ENCODE measurements at regions of chr16 and their contacts with region 1.

Region 1: DNA sequence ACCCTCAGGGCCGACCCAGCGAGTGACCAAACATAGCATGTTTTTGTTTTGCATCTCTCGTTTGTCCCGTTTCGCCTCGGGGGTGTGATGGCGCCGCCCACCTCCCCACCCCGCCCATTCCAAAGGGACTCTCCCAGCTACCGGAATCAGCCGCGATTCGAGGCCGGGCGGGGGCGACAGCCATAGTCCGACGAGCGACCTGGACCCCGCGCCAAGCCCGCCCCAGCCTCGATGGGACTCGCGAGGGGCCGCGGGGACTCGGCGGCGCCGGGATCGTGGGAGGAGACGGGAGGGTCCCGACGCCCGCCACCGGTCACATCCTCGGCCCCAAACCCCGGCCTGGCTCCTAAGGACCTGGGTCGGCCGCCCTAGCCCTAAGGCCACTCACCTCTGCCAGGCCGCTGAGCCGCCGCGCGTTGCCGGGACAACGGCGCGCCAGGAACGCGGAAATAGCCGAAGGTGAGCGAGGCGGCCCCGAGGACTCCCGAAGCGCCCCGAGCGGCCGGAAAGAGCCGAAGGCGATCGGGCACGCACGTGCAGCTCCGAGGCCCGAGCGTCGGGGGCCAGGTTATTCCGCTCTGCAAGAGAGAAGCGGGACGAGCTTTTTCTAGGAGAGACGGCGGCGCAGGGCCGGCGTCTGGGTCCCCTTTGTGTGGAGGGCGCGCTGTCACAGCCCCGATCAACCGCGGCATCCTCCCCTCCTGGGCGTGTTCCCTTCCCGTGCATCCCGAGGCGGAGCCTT is 1.4 kb downstream of the IFT140 start:
- DNase-seq: peak; percentile 84 to 90 (median 86)
- H3K4me3 ChIP-seq: peak overlapping the region; percentile 48 to 85 (median 58)
- H3K4me3 Mint-ChIP-seq: peak overlapping the region; percentile 77 to 80
- H3K27ac ChIP-seq: peak overlapping the region; percentile 36 to 63
- H3K27ac Mint-ChIP-seq: peak overlapping the region in 4 of 7 donors; percentile 24 to 82 (median 62)
- H3K4me1 ChIP-seq: peaks cover 41 to 48% of the 10 kb centered on the region in 2 donors
- H3K4me1 Mint-ChIP-seq: peaks cover 35% of the 10 kb centered on the region
- H3K27me3 ChIP-seq: peaks cover 6 to 19% of the 10 kb centered on the region in 2 donors
- H3K27me3 Mint-ChIP-seq: peaks cover 16 to 22% (median 21%) of the 10 kb centered on the region in 3 donors
- CTCF ChIP-seq: no peak

Region 2: GRCh38 chr16:1420111-1420540 is 190.3 kb before region 1 on chr16:
- intact Hi-C with region 1: loop called in 1 of 2 experiments (anchors 5 kb)
- DNase-seq: no peak
- H3K4me3 ChIP-seq: peak overlapping the region; percentile 64 to 96 (median 69)
- H3K4me3 Mint-ChIP-seq: peak overlapping the region; percentile 86 to 93
- H3K27ac ChIP-seq: peak overlapping the region; percentile 72 to 87
- H3K27ac Mint-ChIP-seq: peak overlapping the region; percentile 72 to 96 (median 94)
- H3K4me1 ChIP-seq: peaks cover 18 to 21% of the 10 kb centered on the region in 2 donors
- H3K4me1 Mint-ChIP-seq: peaks cover 20% of the 10 kb centered on the region
- H3K27me3 ChIP-seq: no peaks in the 10 kb centered on the region
- H3K27me3 Mint-ChIP-seq: no peaks in the 10 kb centered on the region
- CTCF ChIP-seq: no peak

Region 3: GRCh38 chr16:1474796-1475551 is 135.5 kb before region 1 on chr16 and contains the start of gene CLCN7:
- intact Hi-C with region 1: loop called (anchors 5 to 10 kb)
- DNase-seq: peak; percentile 75 to 89 (median 84)
- H3K4me3 ChIP-seq: peak within 1 kb of the TSS; percentile 61 to 81 (median 77)
- H3K4me3 Mint-ChIP-seq: peak within 1 kb of the TSS; percentile 82 to 93
- H3K27ac ChIP-seq: peak within 1 kb of the TSS; percentile 79 to 99
- H3K27ac Mint-ChIP-seq: peak within 1 kb of the TSS; percentile 87 to 95 (median 91)
- H3K4me1 ChIP-seq: peaks cover 54 to 62% of the 10 kb centered on the region in 2 donors
- H3K4me1 Mint-ChIP-seq: peaks cover 47% of the 10 kb centered on the region
- H3K27me3 ChIP-seq: no peaks in the 10 kb centered on the region
- H3K27me3 Mint-ChIP-seq: peaks cover 0 to 5% (median 0%) of the 10 kb centered on the region in 3 donors
- CTCF ChIP-seq: no peak
- polyA plus RNA-seq, gene CLCN7: 37.4 to 249 (median 56.5) TPM

Region 4: GRCh38 chr16:1543085-1543896 is 67.2 kb before region 1 on chr16:
- intact Hi-C with region 1: loop called in 1 of 2 experiments (anchors 10 kb)
- DNase-seq: peak; percentile 85 to 91 (median 85)
- H3K4me3 ChIP-seq: peak overlapping the region in 1 of 3 experiments; percentile 54
- H3K4me3 Mint-ChIP-seq: peak overlapping the region; percentile 40 to 79
- H3K27ac ChIP-seq: peak overlapping the region; percentile 85 to 89
- H3K27ac Mint-ChIP-seq: peak overlapping the region; percentile 90 to 98 (median 95)
- H3K4me1 ChIP-seq: peaks cover 38 to 44% of the 10 kb centered on the region in 2 donors
- H3K4me1 Mint-ChIP-seq: peaks cover 41% of the 10 kb centered on the region
- H3K27me3 ChIP-seq: no peaks in the 10 kb centered on the region
- H3K27me3 Mint-ChIP-seq: no peaks in the 10 kb centered on the region
- CTCF ChIP-seq: no peak

Region 5: GRCh38 chr16:1677802-1678496 is 67.5 kb after region 1 on chr16 and contains the start of gene JPT2:
- intact Hi-C with region 1: loop called in 1 of 2 experiments (anchors 10 kb)
- DNase-seq: peak; percentile 90 to 92 (median 90)
- H3K4me3 ChIP-seq: peak within 1 kb of the TSS; percentile 36 to 80 (median 51)
- H3K4me3 Mint-ChIP-seq: peak within 1 kb of the TSS; percentile 83 to 92
- H3K27ac ChIP-seq: peak within 1 kb of the TSS in 1 of 2 donors; percentile 7
- H3K27ac Mint-ChIP-seq: peak within 1 kb of the TSS in 5 of 7 donors; percentile 21 to 86 (median 75)
- H3K4me1 ChIP-seq: peaks cover 13 to 18% of the 10 kb centered on the region in 2 donors
- H3K4me1 Mint-ChIP-seq: peaks cover 18% of the 10 kb centered on the region
- H3K27me3 ChIP-seq: no peaks in the 10 kb centered on the region
- H3K27me3 Mint-ChIP-seq: peaks cover 0 to 2% (median 0%) of the 10 kb centered on the region in 3 donors
- CTCF ChIP-seq: no peak
- polyA plus RNA-seq, gene JPT2: 5.4 to 7.5 (median 5.8) TPM

Region 6: DNA sequence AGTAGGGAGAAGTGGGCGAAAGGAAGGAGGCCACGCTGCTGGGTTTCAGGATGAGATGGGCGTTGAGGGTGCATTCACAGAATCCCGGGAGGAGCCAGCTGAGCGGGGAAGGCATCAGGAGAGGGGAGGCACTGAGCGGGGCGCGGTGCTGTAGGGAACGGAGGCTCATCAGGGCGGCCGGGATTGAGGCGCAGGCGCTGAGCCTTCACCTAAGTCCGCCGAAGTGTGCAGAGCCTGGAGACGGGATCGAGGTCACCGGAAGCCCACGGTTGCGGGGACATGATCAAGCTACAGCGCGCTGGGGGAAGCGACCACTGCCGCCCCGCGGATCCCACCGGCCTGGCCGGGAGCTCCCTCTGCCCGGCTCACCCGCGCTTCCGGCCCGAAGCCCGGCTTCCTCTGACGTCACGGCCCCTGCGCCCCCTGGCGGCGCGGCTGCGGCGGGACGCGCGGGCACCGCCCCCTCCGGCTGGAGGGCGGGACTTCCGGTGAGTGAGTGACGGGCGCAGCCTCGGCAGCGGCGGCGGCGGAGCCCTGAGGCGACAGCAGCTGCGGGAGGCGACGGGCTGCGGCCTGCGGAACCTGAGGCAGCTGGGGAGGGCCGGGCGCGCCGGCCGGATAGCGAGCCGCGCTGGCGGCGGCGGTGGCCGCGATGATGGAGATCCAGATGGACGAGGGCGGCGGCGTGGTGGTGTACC is 95.4 kb after region 1 on chr16 and contains the start of gene MAPK8IP3:
- intact Hi-C with region 1: loop called in 1 of 2 experiments (anchors 10 kb)
- DNase-seq: peak; percentile 86 to 92 (median 87)
- H3K4me3 ChIP-seq: peak within 1 kb of the TSS; percentile 94 to 97 (median 96)
- H3K4me3 Mint-ChIP-seq: peak within 1 kb of the TSS; percentile 96 to 99
- H3K27ac ChIP-seq: peak within 1 kb of the TSS; percentile 72 to 94
- H3K27ac Mint-ChIP-seq: peak within 1 kb of the TSS; percentile 91 to 100 (median 98)
- H3K4me1 ChIP-seq: peaks cover 22 to 26% of the 10 kb centered on the region in 2 donors
- H3K4me1 Mint-ChIP-seq: peaks cover 37% of the 10 kb centered on the region
- H3K27me3 ChIP-seq: no peaks in the 10 kb centered on the region
- H3K27me3 Mint-ChIP-seq: no peaks in the 10 kb centered on the region
- CTCF ChIP-seq: peak; percentile 95
- polyA plus RNA-seq, gene MAPK8IP3: 1.1 to 185 (median 2.1) TPM

Measured in CD14-positive monocyte (primary cell).